PC-3 (cell line): ENCODE measurements at regions of chr13 and their contacts with region 1.

Region 1: GRCh38 chr13:23510979-23511735 is 59.1 kb upstream of the TNFRSF19 start:
- DNase-seq: peak; percentile 50
- ATAC-seq: peak; percentile 37
- H3K4me3 ChIP-seq: no peak overlapping the region
- H3K27ac ChIP-seq: peak overlapping the region; percentile 83
- H3K4me1 ChIP-seq: peaks cover 32% of the 10 kb centered on the region
- H3K27me3 ChIP-seq: no peaks in the 10 kb centered on the region
- CTCF ChIP-seq: peak; percentile 56

Region 2: GRCh38 chr13:23570099-23570920 is 59.2 kb after region 1 on chr13 and contains the start of gene TNFRSF19:
- CTCF ChIA-PET with region 1: no interaction called
- POLR2A ChIA-PET with region 1: no interaction called
- intact Hi-C with region 1: loop called (anchors 2 kb)
- DNase-seq: peak; percentile 35
- ATAC-seq: peak; percentile 65
- H3K4me3 ChIP-seq: peak within 1 kb of the TSS; percentile 46
- H3K27ac ChIP-seq: no peak within 1 kb of the TSS
- H3K4me1 ChIP-seq: peaks cover 14% of the 10 kb centered on the region; the same call in 1 of the 2 replicates
- H3K27me3 ChIP-seq: no peaks in the 10 kb centered on the region
- CTCF ChIP-seq: no peak
- total RNA-seq, gene TNFRSF19: 4.7 and 6.1 TPM in 2 replicates

Region 3: DNA sequence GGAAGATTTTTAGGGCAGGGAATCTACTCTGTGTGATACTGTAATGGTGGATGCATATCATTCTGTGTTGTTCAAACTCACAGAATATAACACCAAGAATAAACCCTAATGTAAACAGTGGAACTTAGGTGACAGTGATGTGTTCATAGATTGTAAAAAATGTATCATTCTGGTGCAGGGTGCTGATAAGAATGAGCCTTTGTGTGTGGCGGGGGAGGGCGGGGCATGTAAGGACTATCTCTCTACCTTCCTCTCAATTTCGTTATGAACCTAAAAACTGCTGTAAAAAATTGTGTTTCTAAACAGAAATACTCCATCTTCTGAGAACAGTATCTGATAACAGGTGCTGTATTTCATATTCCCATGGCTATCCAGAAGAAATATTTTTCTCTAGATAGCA is 94.7 kb after region 1 on chr13:
- CTCF ChIA-PET with region 1: no interaction called
- POLR2A ChIA-PET with region 1: no interaction called
- intact Hi-C with region 1: no loop called
- DNase-seq: no peak
- ATAC-seq: no peak
- H3K4me3 ChIP-seq: no peak overlapping the region
- H3K27ac ChIP-seq: no peak overlapping the region
- H3K4me1 ChIP-seq: peaks cover 21% of the 10 kb centered on the region
- H3K27me3 ChIP-seq: no peaks in the 10 kb centered on the region
- CTCF ChIP-seq: no peak